ENCODE measurements at regions of chr1 and their contacts with region 1.

Region 1: DNA sequence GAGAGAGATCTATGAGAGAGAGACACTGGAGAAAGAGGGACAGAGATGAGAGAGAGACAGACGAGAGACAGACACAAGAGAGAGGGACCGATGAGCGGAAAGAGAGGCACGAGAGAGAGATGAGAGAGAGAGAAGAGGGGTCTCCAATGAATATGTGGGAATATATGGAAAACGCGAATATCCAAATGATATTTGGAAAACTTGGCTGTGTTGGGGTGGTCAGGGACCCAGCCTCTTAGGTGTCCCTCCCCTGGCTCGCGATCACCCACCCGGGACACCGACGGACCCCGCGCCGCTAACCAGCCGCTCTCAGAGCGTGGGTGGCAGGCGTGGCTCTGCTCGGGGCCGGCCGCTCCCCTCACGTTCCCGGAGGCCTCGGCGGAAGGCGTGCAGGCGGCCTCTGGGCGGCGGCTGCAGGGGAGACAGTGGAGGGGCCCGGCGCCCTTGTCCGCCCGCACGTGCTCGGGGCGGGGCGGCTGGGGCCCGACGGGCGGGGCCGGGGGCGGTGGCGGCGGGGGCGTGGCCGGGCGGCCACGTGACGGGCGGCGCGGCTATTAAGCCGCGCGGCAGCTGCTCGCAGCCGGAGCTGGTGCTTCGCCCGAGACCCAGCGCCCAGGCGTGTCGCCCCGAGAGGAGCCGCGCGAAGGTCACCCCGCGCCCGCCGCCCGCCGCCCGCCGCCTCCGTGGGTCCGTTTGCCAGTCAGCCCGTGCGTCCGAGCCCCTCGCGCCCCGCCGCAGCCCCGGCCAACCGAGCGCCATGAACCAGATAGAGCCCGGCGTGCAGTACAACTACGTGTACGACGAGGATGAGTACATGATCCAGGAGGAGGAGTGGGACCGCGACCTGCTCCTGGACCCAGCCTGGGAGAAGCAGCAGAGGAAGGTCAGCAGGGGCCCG is at the start of gene ACTN2:
- DNase-seq: peak; percentile 57 to 86
- ATAC-seq: peak; percentile 81
- H3K4me3 ChIP-seq: peak within 1 kb of the TSS; percentile 50 to 94
- H3K27ac ChIP-seq: peak within 1 kb of the TSS; percentile 32 to 66
- H3K4me1 ChIP-seq: peaks cover 2 to 6% of the 10 kb centered on the region in 2 donors
- H3K27me3 ChIP-seq: no peaks in the 10 kb centered on the region
- total RNA-seq, gene ACTN2: 15.7 to 40.5 TPM

Region 2: DNA sequence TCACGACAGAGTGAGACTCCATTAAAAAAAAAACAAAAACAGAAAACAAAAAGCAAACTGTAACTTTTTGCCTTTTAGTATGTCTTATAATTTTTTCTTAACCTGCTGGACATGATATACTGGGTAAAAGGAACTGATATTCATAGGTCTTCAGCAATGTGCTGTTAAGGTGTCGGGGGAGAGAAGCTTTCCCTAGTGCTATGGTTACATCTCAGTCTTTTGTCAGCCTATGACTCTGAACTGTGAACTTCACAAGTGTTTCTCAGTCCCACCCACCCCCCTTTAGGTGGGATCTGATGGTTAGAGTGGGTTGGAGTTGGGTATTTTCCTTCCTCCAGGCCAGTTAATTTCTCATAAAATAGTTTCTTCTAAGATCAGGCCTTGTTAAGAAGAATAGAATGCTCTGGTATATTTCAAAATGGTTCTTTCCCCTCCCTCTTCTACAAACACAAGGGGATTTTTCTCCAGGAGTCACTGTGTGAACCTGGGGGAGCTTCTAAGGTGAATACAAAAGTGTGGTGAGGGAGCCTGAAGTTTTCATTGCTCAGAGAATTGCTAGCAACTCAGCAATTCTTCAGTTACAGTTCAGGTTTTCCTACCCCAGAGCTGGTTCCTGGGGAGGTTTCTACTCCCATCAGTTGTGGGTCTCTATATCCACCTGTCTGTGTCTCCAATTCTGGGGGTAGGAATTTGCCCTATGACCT is 308.2 kb before region 1 on chr1:
- intact Hi-C with region 1: no loop called
- DNase-seq: no peak
- ATAC-seq: no peak
- H3K4me3 ChIP-seq: no peak overlapping the region
- H3K27ac ChIP-seq: no peak overlapping the region
- H3K4me1 ChIP-seq: no peaks in the 10 kb centered on the region
- H3K27me3 ChIP-seq: no peaks in the 10 kb centered on the region

Region 3: DNA sequence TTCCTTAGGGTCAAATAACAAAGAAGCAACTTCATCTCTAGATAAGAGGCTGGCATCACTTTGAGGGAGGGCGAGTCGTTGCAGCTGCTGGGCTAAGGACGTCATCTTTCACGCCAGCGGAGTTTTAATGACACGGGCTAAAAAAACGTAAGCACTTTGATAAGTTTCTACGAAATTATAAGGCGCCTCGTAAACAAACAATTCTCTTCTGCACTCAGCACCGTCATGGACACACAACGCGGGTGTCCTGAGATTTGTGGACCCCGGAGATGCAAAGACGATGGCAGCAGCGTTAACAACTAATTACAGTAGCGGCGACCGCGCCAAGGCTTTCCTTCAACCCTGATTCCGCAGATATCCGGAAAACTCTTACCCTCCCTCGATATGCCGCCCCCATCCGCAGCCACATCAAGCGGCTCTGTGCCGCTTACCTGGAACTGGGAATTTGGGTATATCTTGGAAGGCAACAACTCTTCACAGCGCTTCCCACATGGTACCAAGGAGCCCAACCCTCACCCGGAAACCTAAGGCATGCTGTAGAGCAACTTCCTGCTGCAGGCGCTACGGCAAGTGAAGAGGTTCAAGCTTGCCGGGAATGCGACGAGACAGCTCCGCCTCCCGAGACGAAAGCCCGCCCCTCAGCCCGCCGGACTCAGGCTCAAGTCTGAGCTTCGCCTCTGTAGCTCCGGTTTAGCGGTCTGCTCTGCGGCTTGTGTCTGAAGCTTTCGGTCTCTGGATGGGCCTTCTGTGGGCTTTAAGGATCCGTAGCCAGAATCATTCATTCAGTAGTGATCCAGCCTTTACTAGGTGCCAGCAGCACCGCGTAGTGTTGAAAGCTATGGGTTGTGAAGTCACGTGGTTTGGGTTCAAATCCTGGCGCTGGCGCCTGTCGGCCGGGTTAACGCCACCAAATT is 81.9 kb before region 1 on chr1 and contains the start of gene HEATR1:
- intact Hi-C with region 1: loop called in 1 of 2 experiments (anchors 10 kb)
- DNase-seq: peak; percentile 97
- ATAC-seq: peak; percentile 99
- H3K4me3 ChIP-seq: peak within 1 kb of the TSS; percentile 76 to 80
- H3K27ac ChIP-seq: peak within 1 kb of the TSS in 1 of 2 donors; percentile 78
- H3K4me1 ChIP-seq: no peaks in the 10 kb centered on the region
- H3K27me3 ChIP-seq: no peaks in the 10 kb centered on the region
- total RNA-seq, gene HEATR1: 28.2 to 34.9 TPM

Region 4: GRCh38 chr1:236868625-236869467 is 182.7 kb after region 1 on chr1:
- intact Hi-C with region 1: no loop called
- DNase-seq: no peak
- ATAC-seq: peak; percentile 77
- H3K4me3 ChIP-seq: no peak overlapping the region
- H3K27ac ChIP-seq: no peak overlapping the region
- H3K4me1 ChIP-seq: no peaks in the 10 kb centered on the region
- H3K27me3 ChIP-seq: no peaks in the 10 kb centered on the region

Measured in aorta (tissue), 5 donors.